PC-3 (cell line): ENCODE measurements at regions of chr12 and their contacts with region 1.

Region 1: GRCh38 chr12:89417246-89417977 is 65.1 kb upstream of the DUSP6 start:
- DNase-seq: peak; percentile 87
- ATAC-seq: peak; percentile 94
- H3K4me3 ChIP-seq: no peak overlapping the region
- H3K27ac ChIP-seq: peak overlapping the region; percentile 56
- H3K4me1 ChIP-seq: peaks cover 28% of the 10 kb centered on the region
- H3K27me3 ChIP-seq: no peaks in the 10 kb centered on the region
- CTCF ChIP-seq: no peak

Region 2: GRCh38 chr12:89236748-89237388 is 180.5 kb before region 1 on chr12:
- CTCF ChIA-PET with region 1: no interaction called
- POLR2A ChIA-PET with region 1: no interaction called
- intact Hi-C with region 1: no loop called
- DNase-seq: peak; percentile 97
- ATAC-seq: peak; percentile 84
- H3K4me3 ChIP-seq: 0 out of 2 replicates have a peak overlapping the region, but pooled peaks have one; percentile 2
- H3K27ac ChIP-seq: peak overlapping the region; percentile 96
- H3K4me1 ChIP-seq: peaks cover 32% of the 10 kb centered on the region
- H3K27me3 ChIP-seq: no peaks in the 10 kb centered on the region
- CTCF ChIP-seq: no peak

Region 3: DNA sequence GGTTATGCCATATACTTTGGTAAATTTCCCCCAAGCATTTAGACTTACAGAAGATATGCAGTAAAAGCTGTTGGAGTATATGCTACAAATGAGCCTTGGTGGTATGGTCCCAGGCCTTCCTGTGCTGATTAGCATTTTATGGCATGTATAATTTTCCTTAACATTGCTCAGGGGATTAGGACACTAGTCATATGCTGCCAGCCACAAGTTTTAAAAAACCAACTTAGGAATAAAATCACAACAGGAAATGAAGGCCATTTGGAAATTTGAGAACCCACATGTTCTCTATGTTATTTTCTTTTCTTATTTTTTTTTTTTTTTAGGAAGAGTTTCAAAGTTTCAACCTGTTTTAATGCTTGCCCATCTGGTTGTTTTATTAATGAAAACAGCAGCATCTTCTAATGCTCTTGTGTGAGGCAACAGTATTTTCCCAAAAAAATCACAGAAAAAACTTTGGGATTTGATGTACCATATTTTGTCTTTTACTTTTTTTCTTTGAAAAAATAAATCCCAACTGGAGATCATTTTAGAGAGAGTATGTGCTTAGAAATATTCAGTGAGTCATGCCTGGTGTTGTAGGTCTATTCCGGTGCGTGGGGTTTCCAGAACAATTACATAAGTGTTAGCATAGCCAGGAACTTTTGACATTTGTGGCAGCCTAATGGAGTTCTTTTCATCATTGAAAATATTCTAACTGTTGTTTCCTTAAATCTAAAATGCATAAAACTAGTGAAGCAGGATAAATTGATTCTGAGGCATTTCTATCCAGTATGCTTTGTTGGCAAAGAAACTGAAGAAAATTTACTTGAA is 43.4 kb before region 1 on chr12:
- CTCF ChIA-PET with region 1: no interaction called
- POLR2A ChIA-PET with region 1: no interaction called
- intact Hi-C with region 1: loop called (anchors 5 kb)
- DNase-seq: peak; percentile 76
- ATAC-seq: peak; percentile 45
- H3K4me3 ChIP-seq: no peak overlapping the region
- H3K27ac ChIP-seq: peak overlapping the region; percentile 92
- H3K4me1 ChIP-seq: peaks cover 77% of the 10 kb centered on the region
- H3K27me3 ChIP-seq: no peaks in the 10 kb centered on the region
- CTCF ChIP-seq: no peak

Region 4: GRCh38 chr12:89783357-89784060 is 366.1 kb after region 1 on chr12:
- CTCF ChIA-PET with region 1: no interaction called
- POLR2A ChIA-PET with region 1: no interaction called
- intact Hi-C with region 1: no loop called
- DNase-seq: peak; percentile 14
- ATAC-seq: peak; percentile 54
- H3K4me3 ChIP-seq: no peak overlapping the region
- H3K27ac ChIP-seq: peak overlapping the region; percentile 21; the same call in 1 of the 2 replicates
- H3K4me1 ChIP-seq: peaks cover 32% of the 10 kb centered on the region
- H3K27me3 ChIP-seq: no peaks in the 10 kb centered on the region
- CTCF ChIP-seq: no peak